Naive thymus-derived CD4-positive, alpha-beta T cell (primary cell): ENCODE measurements at regions of chr2 and their contacts with region 1.

Region 1: GRCh38 chr2:157336137-157337010 is 10.8 kb upstream of the ERMN start:
- DNase-seq: peak in 7 of 9 donors; percentile 19 to 59 (median 53)
- ATAC-seq: peak; percentile 52
- H3K4me3 ChIP-seq: peak overlapping the region; percentile 5
- H3K4me3 Mint-ChIP-seq: peak overlapping the region; percentile 5 to 86 (median 70)
- H3K27ac ChIP-seq: peak overlapping the region; percentile 15
- H3K27ac Mint-ChIP-seq: peak overlapping the region; percentile 15 to 92 (median 81)
- H3K4me1 ChIP-seq: peaks cover 23 to 58% of the 10 kb centered on the region in 2 donors
- H3K4me1 Mint-ChIP-seq: peaks cover 28 to 90% (median 83%) of the 10 kb centered on the region in 7 donors
- H3K27me3 ChIP-seq: no peaks in the 10 kb centered on the region
- H3K27me3 Mint-ChIP-seq: no peaks in the 10 kb centered on the region

Region 2: GRCh38 chr2:155733091-155733853 is 1603.1 kb before region 1 on chr2:
- CTCF ChIA-PET with region 1: no interaction called
- POLR2A ChIA-PET with region 1: no interaction called
- intact Hi-C with region 1: no loop called
- DNase-seq: no peak
- ATAC-seq: no peak
- H3K4me3 ChIP-seq: no peak overlapping the region
- H3K4me3 Mint-ChIP-seq: no peak overlapping the region
- H3K27ac ChIP-seq: no peak overlapping the region
- H3K27ac Mint-ChIP-seq: no peak overlapping the region
- H3K4me1 ChIP-seq: no peaks in the 10 kb centered on the region
- H3K4me1 Mint-ChIP-seq: no peaks in the 10 kb centered on the region
- H3K27me3 ChIP-seq: no peaks in the 10 kb centered on the region
- H3K27me3 Mint-ChIP-seq: no peaks in the 10 kb centered on the region

Region 3: DNA sequence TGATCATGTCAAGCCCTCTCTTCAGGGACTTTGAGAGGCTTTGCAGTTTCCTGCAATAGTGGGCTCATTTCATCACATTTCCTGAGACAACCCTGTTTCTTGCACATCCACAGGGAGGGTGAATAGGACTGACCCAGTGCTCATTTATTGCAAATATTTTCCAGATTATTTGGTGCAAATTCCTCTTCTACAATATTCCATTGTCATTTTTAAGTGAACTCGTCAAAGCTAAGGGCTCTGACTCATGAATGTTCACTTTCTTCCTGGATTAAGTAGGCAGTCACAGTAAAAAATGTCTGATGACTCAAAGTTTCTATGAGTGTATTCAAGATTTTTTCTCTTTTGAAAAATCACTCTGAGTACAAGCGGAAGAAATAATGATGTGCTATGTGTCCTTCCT is 304.4 kb before region 1 on chr2:
- CTCF ChIA-PET with region 1: no interaction called
- POLR2A ChIA-PET with region 1: no interaction called
- intact Hi-C with region 1: no loop called
- DNase-seq: no peak
- ATAC-seq: no peak
- H3K4me3 ChIP-seq: no peak overlapping the region
- H3K4me3 Mint-ChIP-seq: no peak overlapping the region
- H3K27ac ChIP-seq: no peak overlapping the region
- H3K27ac Mint-ChIP-seq: no peak overlapping the region
- H3K4me1 ChIP-seq: no peaks in the 10 kb centered on the region
- H3K4me1 Mint-ChIP-seq: no peaks in the 10 kb centered on the region
- H3K27me3 ChIP-seq: no peaks in the 10 kb centered on the region
- H3K27me3 Mint-ChIP-seq: no peaks in the 10 kb centered on the region

Region 4: DNA sequence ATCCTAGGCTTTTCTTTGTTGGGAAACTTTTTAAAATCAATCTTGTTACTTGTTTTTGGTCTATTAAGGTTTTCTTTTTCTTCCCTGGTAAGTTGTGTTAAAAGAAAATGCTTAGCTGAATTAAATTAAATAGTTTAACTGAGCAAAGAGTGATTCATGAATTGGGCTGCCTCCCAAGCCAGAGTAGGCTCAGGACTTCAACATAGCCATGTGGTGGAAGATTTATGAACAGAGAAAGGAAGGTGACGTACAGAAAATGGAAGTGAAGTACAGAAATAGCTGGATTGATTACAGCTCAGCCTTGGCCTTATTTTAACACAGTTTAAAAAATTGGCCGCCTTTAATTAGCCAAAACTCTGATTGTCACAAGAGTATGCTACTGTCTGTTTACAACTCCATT is 106.8 kb before region 1 on chr2:
- CTCF ChIA-PET with region 1: no interaction called
- POLR2A ChIA-PET with region 1: no interaction called
- intact Hi-C with region 1: no loop called
- DNase-seq: no peak
- ATAC-seq: no peak
- H3K4me3 ChIP-seq: no peak overlapping the region
- H3K4me3 Mint-ChIP-seq: no peak overlapping the region
- H3K27ac ChIP-seq: no peak overlapping the region
- H3K27ac Mint-ChIP-seq: no peak overlapping the region
- H3K4me1 ChIP-seq: no peaks in the 10 kb centered on the region
- H3K4me1 Mint-ChIP-seq: no peaks in the 10 kb centered on the region
- H3K27me3 ChIP-seq: no peaks in the 10 kb centered on the region
- H3K27me3 Mint-ChIP-seq: peaks cover 12 to 22% (median 18%) of the 10 kb centered on the region in 5 donors

Region 5: DNA sequence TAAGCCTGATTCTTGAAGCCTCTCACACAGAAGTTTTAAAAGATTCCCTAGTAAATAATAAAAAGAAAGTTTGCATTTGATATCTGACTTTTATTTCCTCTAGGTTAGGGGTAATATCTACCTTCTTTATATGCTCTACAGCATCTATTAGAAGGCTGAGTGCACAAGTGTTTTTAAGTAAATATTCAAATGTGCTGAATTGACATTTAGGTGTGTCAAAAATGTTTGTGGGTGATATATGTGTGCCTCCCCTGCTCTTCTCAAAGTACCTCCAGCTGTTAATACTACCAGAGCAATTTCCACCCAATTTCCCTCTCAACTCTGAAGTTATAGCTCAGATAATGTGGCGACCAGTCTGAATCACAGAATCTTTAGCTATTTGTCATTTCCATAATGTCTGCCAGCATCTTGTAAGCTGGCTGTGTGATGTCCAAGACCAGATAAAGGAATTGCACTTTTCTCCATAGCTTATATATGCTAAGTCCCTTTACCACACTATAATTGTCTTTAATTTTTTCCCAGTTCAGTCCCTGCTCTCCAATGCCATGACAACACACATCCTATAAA is 13.7 kb after region 1 on chr2:
- CTCF ChIA-PET with region 1: interaction called, 39 read pairs
- POLR2A ChIA-PET with region 1: interaction called, 12 read pairs
- intact Hi-C with region 1: loop called in 1 of 2 experiments (anchors 2 kb)
- DNase-seq: no peak
- ATAC-seq: no peak
- H3K4me3 ChIP-seq: no peak overlapping the region
- H3K4me3 Mint-ChIP-seq: peak overlapping the region in 1 of 10 donors; percentile 14
- H3K27ac ChIP-seq: no peak overlapping the region
- H3K27ac Mint-ChIP-seq: peak overlapping the region in 4 of 9 donors; percentile 31 to 77 (median 46)
- H3K4me1 ChIP-seq: peaks cover 0 to 25% of the 10 kb centered on the region in 2 donors
- H3K4me1 Mint-ChIP-seq: peaks cover 0 to 81% (median 65%) of the 10 kb centered on the region in 7 donors
- H3K27me3 ChIP-seq: no peaks in the 10 kb centered on the region
- H3K27me3 Mint-ChIP-seq: no peaks in the 10 kb centered on the region

Region 6: GRCh38 chr2:157355618-157356017 is 19.2 kb after region 1 on chr2:
- CTCF ChIA-PET with region 1: interaction called, 20 read pairs
- POLR2A ChIA-PET with region 1: interaction called, 7 read pairs
- intact Hi-C with region 1: loop called in 1 of 2 experiments (anchors 2 kb)
- DNase-seq: no peak
- ATAC-seq: no peak
- H3K4me3 ChIP-seq: no peak overlapping the region
- H3K4me3 Mint-ChIP-seq: peak overlapping the region in 2 of 10 donors; percentile 5 to 53
- H3K27ac ChIP-seq: no peak overlapping the region
- H3K27ac Mint-ChIP-seq: peak overlapping the region in 5 of 9 donors; percentile 29 to 63 (median 42)
- H3K4me1 ChIP-seq: peaks cover 0 to 21% of the 10 kb centered on the region in 2 donors
- H3K4me1 Mint-ChIP-seq: peaks cover 4 to 71% (median 63%) of the 10 kb centered on the region in 7 donors
- H3K27me3 ChIP-seq: no peaks in the 10 kb centered on the region
- H3K27me3 Mint-ChIP-seq: no peaks in the 10 kb centered on the region

Region 7: GRCh38 chr2:157386247-157386646 is 49.9 kb after region 1 on chr2:
- CTCF ChIA-PET with region 1: no interaction called
- POLR2A ChIA-PET with region 1: interaction called, 3 read pairs
- intact Hi-C with region 1: loop called in 1 of 2 experiments (anchors 2 kb)
- DNase-seq: no peak
- ATAC-seq: peak; percentile 34
- H3K4me3 ChIP-seq: no peak overlapping the region
- H3K4me3 Mint-ChIP-seq: peak overlapping the region in 4 of 10 donors; percentile 0 to 41 (median 20)
- H3K27ac ChIP-seq: no peak overlapping the region
- H3K27ac Mint-ChIP-seq: peak overlapping the region in 8 of 9 donors; percentile 44 to 87 (median 72)
- H3K4me1 ChIP-seq: peaks cover 3 to 21% of the 10 kb centered on the region in 2 donors
- H3K4me1 Mint-ChIP-seq: peaks cover 9 to 73% (median 68%) of the 10 kb centered on the region in 7 donors
- H3K27me3 ChIP-seq: no peaks in the 10 kb centered on the region
- H3K27me3 Mint-ChIP-seq: no peaks in the 10 kb centered on the region

Region 8: DNA sequence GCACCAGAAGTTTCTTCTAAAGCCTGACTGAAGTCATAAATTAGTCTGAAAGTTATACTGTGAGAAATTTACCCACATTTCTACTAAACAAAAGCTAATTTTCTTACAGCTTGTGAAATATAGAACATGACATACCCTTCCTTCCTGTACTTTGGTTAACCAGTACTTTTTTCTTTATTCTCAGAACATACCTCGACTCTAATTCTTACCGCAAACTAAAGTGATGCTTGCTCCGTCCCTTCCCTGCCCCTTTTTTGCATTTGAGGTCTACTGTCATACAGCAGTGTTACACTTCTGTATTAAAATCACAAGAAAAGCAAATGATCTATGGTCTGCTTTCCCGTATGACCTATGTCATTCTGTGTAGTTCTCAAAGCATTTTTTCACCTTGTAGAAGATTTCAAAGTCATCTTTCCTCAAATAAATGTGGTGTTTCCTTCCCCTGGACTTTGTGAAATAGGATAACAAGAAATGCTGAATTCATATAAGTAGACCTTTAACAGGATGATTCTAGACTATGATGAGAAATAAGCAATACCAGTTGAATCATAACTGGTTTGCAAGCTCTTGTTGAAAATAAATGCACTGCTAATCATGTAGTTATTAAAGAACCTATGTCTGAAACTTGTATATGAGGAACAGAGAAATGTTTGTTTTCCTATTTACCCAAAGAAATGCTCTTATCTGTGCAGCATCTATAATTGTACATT is 77.1 kb after region 1 on chr2:
- CTCF ChIA-PET with region 1: interaction called, 9 read pairs
- POLR2A ChIA-PET with region 1: interaction called, 554 read pairs
- intact Hi-C with region 1: loop called in 1 of 2 experiments (anchors 1 kb)
- DNase-seq: peak in 7 of 9 donors; percentile 71 to 94 (median 88)
- ATAC-seq: peak; percentile 86
- H3K4me3 ChIP-seq: peak overlapping the region; percentile 22
- H3K4me3 Mint-ChIP-seq: peak overlapping the region; percentile 45 to 85 (median 68)
- H3K27ac ChIP-seq: peak overlapping the region; percentile 86
- H3K27ac Mint-ChIP-seq: peak overlapping the region; percentile 92 to 98 (median 95)
- H3K4me1 ChIP-seq: peaks cover 84 to 89% of the 10 kb centered on the region in 2 donors
- H3K4me1 Mint-ChIP-seq: peaks cover 58 to 97% (median 93%) of the 10 kb centered on the region in 7 donors
- H3K27me3 ChIP-seq: no peaks in the 10 kb centered on the region
- H3K27me3 Mint-ChIP-seq: no peaks in the 10 kb centered on the region

Region 9: DNA sequence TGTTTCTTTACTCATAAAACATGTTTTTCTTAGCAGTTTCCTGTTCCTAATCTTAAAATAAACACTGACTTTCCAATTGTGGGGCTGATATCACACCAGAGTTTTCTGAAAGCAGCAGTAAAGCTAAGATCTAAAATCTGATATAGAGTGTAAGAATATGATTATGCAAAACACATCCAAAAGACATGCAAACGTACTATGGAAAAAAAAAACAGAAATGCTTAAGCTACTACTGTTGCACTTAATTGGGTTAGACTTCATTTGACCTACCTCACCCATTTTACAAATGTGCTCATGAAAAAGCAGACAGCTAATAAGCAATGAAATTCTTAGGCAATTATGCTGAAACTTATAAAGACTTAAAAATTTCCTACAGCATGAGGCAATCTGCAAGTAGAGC is 97.0 kb after region 1 on chr2:
- CTCF ChIA-PET with region 1: interaction called, 36 read pairs
- POLR2A ChIA-PET with region 1: interaction called, 554 read pairs
- intact Hi-C with region 1: no loop called
- DNase-seq: peak in 2 of 9 donors; percentile 40 to 60
- ATAC-seq: peak; percentile 7
- H3K4me3 ChIP-seq: peak overlapping the region; percentile 60
- H3K4me3 Mint-ChIP-seq: peak overlapping the region; percentile 87 to 100 (median 97)
- H3K27ac ChIP-seq: peak overlapping the region; percentile 89
- H3K27ac Mint-ChIP-seq: peak overlapping the region; percentile 86 to 99 (median 96)
- H3K4me1 ChIP-seq: peaks cover 54 to 62% of the 10 kb centered on the region in 2 donors
- H3K4me1 Mint-ChIP-seq: peaks cover 61 to 89% (median 73%) of the 10 kb centered on the region in 7 donors
- H3K27me3 ChIP-seq: no peaks in the 10 kb centered on the region
- H3K27me3 Mint-ChIP-seq: no peaks in the 10 kb centered on the region